ENCODE measurements at regions of chr2 and their contacts with region 1.

Region 1: DNA sequence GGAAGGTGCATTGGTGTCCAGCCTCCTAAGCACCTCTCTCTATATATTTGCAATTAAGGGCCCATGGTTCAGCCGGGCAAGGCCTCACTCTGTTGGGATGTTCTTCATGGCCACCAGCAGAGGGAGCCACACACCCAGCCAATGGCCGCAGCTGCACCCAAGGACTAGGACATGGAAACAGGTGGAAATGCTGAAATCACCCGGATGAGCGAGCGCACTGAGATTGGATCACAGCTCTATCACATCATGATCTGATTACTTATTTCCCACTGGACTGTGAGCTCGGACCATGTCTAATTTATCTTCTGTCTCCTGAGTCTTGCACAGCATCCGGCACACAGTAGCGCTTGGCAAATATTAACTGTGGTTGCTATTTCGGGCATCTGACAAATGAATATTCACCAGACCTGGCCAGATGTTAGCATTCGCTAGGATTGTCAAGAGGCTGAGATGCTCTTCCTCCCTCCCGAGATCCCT is 31.2 kb downstream of the KIF3C start:
- DNase-seq: peak; percentile 59 to 71
- ATAC-seq: peak; percentile 91 to 97
- H3K4me3 ChIP-seq: no peak overlapping the region
- H3K27ac ChIP-seq: peak overlapping the region in 2 of 4 donors; percentile 29 to 48
- H3K4me1 ChIP-seq: no peaks in the 10 kb centered on the region
- H3K27me3 ChIP-seq: no peaks in the 10 kb centered on the region
- CTCF ChIP-seq: peak; percentile 90 to 95 (median 92)
- POLR2A ChIP-seq: no peak

Region 2: DNA sequence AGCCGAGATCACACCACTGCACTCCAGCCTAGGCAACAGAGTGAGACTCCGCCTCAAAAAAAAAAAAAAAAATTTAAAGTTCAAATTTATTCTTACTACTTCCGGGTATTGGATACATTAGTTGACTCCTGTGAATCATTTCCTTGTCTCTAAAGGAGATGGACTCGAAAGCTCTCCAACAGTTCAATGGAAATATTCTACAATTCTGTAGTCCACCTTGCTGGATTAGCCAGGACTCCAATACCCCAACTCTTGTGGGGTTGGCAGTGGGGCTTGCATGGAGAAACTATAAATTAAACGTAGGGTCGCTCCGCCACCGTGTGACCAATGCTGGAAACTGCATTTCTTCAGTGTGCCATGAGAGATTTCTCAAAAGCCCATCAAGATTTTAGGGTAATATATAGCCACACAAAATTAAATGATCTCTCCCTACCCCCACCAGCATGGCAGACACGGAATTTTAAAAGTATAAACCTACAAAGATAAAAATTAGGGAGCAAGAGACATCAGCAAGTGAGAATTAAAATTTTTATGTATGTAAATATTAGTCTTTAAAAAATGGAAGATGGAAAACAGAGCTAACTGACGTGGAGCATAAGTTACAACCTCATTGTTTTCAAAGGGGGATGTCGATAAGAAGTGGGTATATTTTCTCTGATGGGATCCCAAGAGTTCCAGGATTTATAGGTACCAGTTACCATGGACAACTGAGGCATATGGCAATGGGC is 194.0 kb after region 1 on chr2:
- in situ Hi-C with region 1: loop called in 1 of 4 experiments (anchors 10 kb)
- intact Hi-C with region 1: loop called (anchors 1 kb)
- DNase-seq: peak in 1 of 2 donors; percentile 49
- ATAC-seq: peak; percentile 57 to 61
- H3K4me3 ChIP-seq: no peak overlapping the region
- H3K27ac ChIP-seq: peak overlapping the region in 1 of 4 donors; percentile 13
- H3K4me1 ChIP-seq: peaks cover 3 to 10% of the 10 kb centered on the region in 2 donors
- H3K27me3 ChIP-seq: no peaks in the 10 kb centered on the region
- CTCF ChIP-seq: peak; percentile 78 to 85 (median 81)
- POLR2A ChIP-seq: no peak